Dorsolateral prefrontal cortex (tissue), 120 donors: ENCODE measurements at regions of chr14 and their contacts with region 1.

Region 1: GRCh38 chr14:65958664-65959562 is 527.3 kb upstream of the CCDC196 start:
- DNase-seq: peak in 1 of 10 donors; percentile 46
- H3K4me3 ChIP-seq: no peak overlapping the region
- H3K27ac ChIP-seq: no peak overlapping the region
- H3K27me3 ChIP-seq: no peaks in the 10 kb centered on the region
- CTCF ChIP-seq: peak; percentile 45 to 79 (median 66)

Region 2: DNA sequence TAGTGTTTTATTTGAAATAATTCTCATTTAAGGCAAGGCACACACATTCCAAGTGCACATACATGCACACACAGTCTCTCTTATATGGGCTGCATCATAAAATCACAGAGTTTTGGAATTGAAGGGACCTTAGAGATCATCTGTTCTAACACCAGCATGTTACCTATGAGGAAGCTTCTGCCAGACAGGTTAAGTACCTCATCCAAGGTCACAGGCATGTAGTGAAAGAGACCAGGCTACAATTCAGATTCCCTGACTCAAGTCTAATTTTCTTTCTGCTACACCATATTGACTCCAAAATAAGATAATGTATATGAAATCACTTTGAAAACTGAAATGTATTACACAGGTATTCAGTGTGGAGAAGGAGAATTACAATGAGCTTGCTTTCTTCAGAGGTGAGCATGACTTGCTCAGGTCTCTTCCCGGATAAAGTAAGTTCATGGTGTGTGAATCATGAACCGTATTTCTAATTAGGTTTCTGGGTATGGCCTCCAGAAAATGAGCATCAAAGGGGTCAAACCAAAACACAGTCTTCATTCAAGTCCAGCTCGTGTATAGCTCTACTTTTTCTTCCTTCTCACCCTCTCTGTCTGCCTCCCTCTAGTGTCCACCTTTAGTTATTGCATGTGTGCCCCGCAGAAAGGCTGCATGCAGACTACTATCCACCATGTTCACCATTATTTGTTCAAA is 134.5 kb before region 1 on chr14:
- intact Hi-C with region 1: loop called (anchors 10 kb)
- DNase-seq: peak in 7 of 10 donors; percentile 29 to 57 (median 46)
- H3K4me3 ChIP-seq: no peak overlapping the region
- H3K27ac ChIP-seq: no peak overlapping the region
- H3K27me3 ChIP-seq: no peaks in the 10 kb centered on the region
- CTCF ChIP-seq: peak; percentile 76 to 97 (median 91)

Region 3: GRCh38 chr14:65927931-65928356 is 31.0 kb before region 1 on chr14:
- intact Hi-C with region 1: no loop called
- DNase-seq: no peak
- H3K4me3 ChIP-seq: no peak overlapping the region
- H3K27ac ChIP-seq: no peak overlapping the region
- H3K27me3 ChIP-seq: peaks cover 0 to 6% (median 0%) of the 10 kb centered on the region in 45 donors
- CTCF ChIP-seq: no peak

Region 4: DNA sequence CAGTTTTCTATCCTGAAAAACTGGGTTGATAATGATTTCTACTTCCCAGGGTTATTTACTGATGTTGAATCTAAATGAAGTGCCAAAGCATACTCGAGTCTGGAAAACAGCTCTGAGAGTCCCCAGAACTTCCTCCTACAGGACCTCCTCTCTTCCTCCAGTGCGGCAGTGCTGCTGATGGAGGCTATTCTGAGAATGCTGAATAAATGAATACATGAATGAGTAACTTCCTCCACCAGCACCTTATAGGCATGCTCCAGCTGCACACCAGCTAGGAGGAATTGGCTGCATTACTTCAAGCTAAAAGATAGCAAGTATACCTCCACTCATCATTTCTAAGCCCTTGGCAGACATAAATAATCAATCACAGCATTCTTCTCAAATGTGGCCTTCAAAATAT is 78.4 kb after region 1 on chr14:
- intact Hi-C with region 1: no loop called
- DNase-seq: no peak
- H3K4me3 ChIP-seq: no peak overlapping the region
- H3K27ac ChIP-seq: no peak overlapping the region
- H3K27me3 ChIP-seq: no peaks in the 10 kb centered on the region
- CTCF ChIP-seq: no peak

Region 5: DNA sequence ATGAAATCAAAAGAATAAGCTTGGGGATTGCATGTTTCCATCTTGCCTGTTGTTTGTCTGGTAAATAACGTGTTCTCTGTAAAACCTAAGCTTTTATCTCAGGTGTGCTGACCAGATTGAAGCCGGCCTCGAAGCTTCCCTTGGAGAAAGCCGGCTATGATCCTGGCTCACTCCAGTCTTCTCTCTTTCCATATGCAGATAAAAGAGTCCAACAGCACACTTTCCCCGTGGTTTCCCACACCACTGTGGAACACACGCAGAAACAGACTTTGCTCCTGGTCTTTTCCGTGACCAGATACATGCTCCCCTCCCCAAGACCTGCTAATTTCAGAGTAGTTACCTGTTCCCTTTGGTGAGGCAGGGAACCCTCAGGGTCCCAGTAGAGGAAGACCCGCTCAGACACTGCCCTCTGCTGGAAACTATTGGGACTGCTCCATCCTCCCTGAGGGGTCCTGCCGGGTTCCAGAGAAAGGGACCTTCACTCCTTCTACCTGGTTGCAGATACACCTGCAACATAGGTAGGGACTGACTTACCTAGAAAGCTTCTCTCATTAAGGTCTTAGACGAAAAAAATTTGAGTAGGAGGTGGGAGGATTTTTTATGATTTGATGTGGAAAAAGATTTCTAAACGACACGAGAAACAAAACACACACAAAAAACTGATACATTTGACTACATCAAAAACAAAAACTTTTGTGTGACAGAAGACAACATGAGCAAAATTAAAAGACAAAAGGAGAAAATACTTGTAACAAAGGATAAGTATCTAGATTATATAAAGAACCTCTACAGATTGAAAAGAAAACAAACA is 111.8 kb after region 1 on chr14:
- intact Hi-C with region 1: loop called in 1 of 2 experiments (anchors 2 kb)
- DNase-seq: peak in 4 of 10 donors; percentile 17 to 66 (median 50)
- H3K4me3 ChIP-seq: peak overlapping the region in 14 of 59 donors; percentile 1 to 40 (median 17)
- H3K27ac ChIP-seq: peak overlapping the region in 1 of 59 donors; percentile 17
- H3K27me3 ChIP-seq: no peaks in the 10 kb centered on the region
- CTCF ChIP-seq: peak in 55 of 56 donors; percentile 46 to 85 (median 75)